Right ventricle myocardium superior (tissue), 1 donor: ENCODE measurements at regions of chr16 and their contacts with region 1.

Region 1: DNA sequence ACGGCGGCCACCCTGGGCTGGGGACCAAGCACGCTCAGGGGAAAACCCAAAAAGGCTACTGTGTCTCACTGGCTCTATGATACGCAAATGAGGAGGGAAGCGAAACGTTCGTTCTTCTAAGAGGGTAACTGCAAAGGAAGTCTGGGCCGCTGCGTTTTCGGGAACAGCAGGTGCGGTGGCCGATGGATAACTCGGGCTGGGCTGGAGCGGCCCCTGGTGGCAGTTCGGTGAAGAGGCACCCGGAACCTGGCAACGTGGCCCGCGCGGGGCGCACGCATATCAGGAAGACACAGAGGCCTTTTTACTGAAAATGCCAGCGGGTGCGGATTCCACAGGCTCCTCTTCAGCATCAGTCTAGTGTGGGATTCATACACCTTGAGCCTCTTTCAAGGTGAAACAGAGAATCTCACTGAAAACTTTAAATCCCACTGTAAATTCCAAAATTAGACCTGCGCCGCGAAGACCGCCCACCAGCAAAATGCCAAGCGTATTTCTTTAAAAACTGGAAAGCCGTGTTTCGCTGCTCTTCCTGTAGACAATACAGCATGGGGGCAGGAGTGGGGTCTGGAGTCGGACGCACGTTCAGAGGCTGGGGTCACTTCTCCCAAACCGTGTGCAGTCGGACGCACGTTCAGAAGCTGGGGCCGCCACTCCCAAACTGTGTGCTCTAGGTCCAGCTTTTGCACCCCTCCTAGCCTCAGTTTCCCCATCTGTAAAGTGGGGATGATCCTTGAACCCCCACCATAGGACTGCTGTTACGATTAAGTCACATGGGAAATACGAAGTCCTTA is 44.4 kb upstream of the METTL9 start:
- DNase-seq: peak; percentile 94
- ATAC-seq: peak; percentile 88

Region 2: GRCh38 chr16:20956319-20956718 is 598.7 kb before region 1 on chr16:
- intact Hi-C with region 1: no loop called
- DNase-seq: no peak
- ATAC-seq: no peak

Region 3: GRCh38 chr16:21184834-21185233 is 370.2 kb before region 1 on chr16:
- intact Hi-C with region 1: loop called (anchors 10 kb)
- DNase-seq: no peak
- ATAC-seq: no peak

Region 4: GRCh38 chr16:21684199-21684598 is 129.2 kb after region 1 on chr16:
- intact Hi-C with region 1: no loop called
- DNase-seq: no peak
- ATAC-seq: no peak